Activated CD8-positive, alpha-beta T cell treated with anti-CD3 and anti-CD28 coated beads for 36 hours (primary cell): ENCODE measurements at regions of chr4 and their contacts with region 1.

Region 1: DNA sequence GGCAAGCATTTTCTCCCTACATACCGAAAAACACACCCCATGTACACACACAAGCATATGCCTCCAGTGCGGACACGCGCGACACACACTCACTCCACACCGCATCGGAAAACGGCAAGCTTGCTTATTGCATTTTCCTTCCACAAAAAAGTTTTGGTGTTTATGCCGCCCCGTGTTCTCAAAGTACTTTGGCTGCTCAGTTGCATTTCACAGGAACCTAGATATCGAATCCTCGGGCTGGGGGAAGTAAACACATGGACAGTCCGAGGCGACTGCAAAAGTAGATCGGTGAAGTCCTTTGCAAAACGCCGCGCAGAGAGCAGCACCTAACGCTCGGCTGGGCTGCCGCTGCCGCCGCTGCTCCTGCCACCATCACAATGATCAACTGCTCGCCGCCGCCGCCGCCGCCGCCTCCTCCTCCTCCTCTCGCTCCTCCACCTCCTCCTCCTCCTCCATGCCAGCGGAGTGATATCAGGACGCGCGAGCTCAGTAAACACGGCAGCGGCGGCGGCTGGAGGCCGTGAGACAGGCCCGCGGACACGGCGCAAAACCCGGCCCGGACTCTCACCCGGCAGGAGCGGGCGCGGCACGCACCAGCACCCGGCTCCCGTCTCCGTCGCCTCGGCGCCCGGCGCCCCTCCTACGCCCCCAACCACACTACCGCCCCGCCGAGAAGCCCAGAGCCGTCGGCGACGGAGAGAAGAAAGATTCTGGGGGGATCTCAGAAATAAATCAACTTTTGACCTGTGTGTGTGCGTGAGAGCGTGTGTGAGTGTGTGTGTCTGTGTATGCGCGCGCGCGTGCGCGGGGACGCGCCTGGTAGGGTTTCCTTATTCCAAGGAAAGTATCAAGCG is at the start of gene MAML3:
- DNase-seq: peak; percentile 88
- ATAC-seq: peak; percentile 32
- H3K4me3 Mint-ChIP-seq: peak within 1 kb of the TSS; percentile 84
- H3K27ac Mint-ChIP-seq: peak within 1 kb of the TSS; percentile 64
- H3K4me1 Mint-ChIP-seq: peaks cover 42% of the 10 kb centered on the region
- H3K27me3 Mint-ChIP-seq: peaks cover 12% of the 10 kb centered on the region
- CTCF ChIP-seq: no peak
- total RNA-seq, gene MAML3: 2.0 to 2.4 TPM

Region 2: DNA sequence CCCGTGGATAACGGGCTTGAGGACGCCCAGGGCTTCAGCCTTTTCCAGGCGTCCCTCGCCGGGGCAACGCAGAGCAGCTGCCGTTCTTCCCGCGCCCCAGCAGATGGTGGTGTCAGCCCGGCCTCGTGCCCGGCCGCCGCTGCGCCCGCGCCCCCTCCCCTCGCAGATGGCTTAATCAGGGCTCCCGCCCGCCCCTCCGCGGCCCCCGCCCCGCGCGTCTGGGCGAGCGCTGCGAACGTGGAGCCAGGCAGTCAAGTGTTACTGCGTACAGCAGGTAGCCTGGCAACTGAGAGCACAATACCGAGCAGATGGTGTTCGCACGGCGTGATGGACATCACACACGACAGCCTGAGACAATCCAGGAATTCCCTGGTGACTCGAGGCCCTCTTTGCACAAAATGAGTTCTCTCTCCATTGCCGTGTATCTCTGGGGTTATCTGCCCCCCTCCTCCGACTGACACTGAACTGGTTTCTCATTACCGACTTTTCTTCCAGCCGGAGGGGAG is 419.0 kb before region 1 on chr4:
- CTCF ChIA-PET with region 1: no interaction called
- POLR2A ChIA-PET with region 1: no interaction called
- intact Hi-C with region 1: loop called (anchors 10 kb)
- DNase-seq: peak; percentile 76
- ATAC-seq: peak; percentile 82
- H3K4me3 Mint-ChIP-seq: peak overlapping the region; percentile 60
- H3K27ac Mint-ChIP-seq: no peak overlapping the region
- H3K4me1 Mint-ChIP-seq: peaks cover 16% of the 10 kb centered on the region
- H3K27me3 Mint-ChIP-seq: peaks cover 38% of the 10 kb centered on the region
- CTCF ChIP-seq: peak; percentile 78

Region 3: DNA sequence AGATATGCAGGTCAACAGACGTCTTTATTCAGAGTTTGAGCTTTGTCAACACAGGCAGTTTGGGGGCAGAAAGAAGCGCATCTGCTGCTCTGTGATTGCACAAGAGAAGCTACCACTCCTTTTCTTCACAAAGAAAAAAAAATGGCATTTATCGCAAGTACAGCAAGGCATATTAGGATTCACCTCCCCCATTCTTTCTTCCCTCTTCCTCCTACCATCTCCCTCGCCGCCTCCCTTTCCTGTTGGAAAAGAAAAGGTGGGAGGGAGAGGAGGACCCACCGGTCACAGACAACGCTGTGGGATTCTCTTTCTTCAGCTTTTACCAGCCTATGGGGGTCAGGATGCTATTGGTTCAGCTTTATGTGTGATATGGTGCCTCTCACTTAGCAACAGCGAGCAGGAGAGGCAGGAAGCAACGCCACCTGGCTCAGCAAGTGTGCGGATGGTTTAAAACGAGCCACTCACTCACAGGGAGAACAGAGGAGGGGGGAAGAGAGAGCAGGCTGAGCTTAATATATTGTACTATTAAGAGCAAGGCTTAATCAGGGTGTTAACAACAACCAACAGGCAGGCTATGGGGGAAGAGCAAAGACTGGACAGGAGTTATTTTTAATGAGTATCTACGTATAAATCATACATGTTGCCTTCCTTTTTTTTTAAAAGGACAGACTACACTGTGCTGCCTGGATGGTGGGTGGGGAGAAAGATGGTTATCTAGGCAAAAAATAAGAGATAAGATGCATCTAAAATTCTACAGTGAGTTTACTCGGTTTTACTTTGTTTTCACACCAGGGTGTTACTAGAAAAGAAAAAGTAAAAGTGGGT is 104.7 kb before region 1 on chr4:
- CTCF ChIA-PET with region 1: interaction called, 11 read pairs
- POLR2A ChIA-PET with region 1: interaction called, 7 read pairs
- intact Hi-C with region 1: loop called (anchors 5 kb)
- DNase-seq: peak; percentile 74
- ATAC-seq: peak; percentile 93
- H3K4me3 Mint-ChIP-seq: peak overlapping the region; percentile 75
- H3K27ac Mint-ChIP-seq: peak overlapping the region; percentile 83
- H3K4me1 Mint-ChIP-seq: peaks cover 57% of the 10 kb centered on the region
- H3K27me3 Mint-ChIP-seq: peaks cover 7% of the 10 kb centered on the region
- CTCF ChIP-seq: no peak

Region 4: GRCh38 chr4:140061194-140061593 is 92.8 kb before region 1 on chr4:
- CTCF ChIA-PET with region 1: no interaction called
- POLR2A ChIA-PET with region 1: no interaction called
- intact Hi-C with region 1: no loop called
- DNase-seq: no peak
- ATAC-seq: peak; percentile 41
- H3K4me3 Mint-ChIP-seq: peak overlapping the region; percentile 20
- H3K27ac Mint-ChIP-seq: no peak overlapping the region
- H3K4me1 Mint-ChIP-seq: peaks cover 21% of the 10 kb centered on the region
- H3K27me3 Mint-ChIP-seq: peaks cover 9% of the 10 kb centered on the region
- CTCF ChIP-seq: no peak

Region 5: GRCh38 chr4:140071806-140072205 is 82.1 kb before region 1 on chr4:
- CTCF ChIA-PET with region 1: interaction called, 8 read pairs
- POLR2A ChIA-PET with region 1: interaction called, 19 read pairs
- intact Hi-C with region 1: loop called (anchors 5 kb)
- DNase-seq: peak; percentile 94
- ATAC-seq: peak; percentile 83
- H3K4me3 Mint-ChIP-seq: peak overlapping the region; percentile 63
- H3K27ac Mint-ChIP-seq: peak overlapping the region; percentile 79
- H3K4me1 Mint-ChIP-seq: peaks cover 44% of the 10 kb centered on the region
- H3K27me3 Mint-ChIP-seq: peaks cover 23% of the 10 kb centered on the region
- CTCF ChIP-seq: no peak

Region 6: GRCh38 chr4:140095694-140096482 is 58.1 kb before region 1 on chr4:
- CTCF ChIA-PET with region 1: interaction called, 4 read pairs
- POLR2A ChIA-PET with region 1: interaction called, 7 read pairs
- intact Hi-C with region 1: loop called (anchors 2 kb)
- DNase-seq: peak; percentile 91
- ATAC-seq: peak; percentile 81
- H3K4me3 Mint-ChIP-seq: peak overlapping the region; percentile 79
- H3K27ac Mint-ChIP-seq: peak overlapping the region; percentile 98
- H3K4me1 Mint-ChIP-seq: peaks cover 89% of the 10 kb centered on the region
- H3K27me3 Mint-ChIP-seq: no peaks in the 10 kb centered on the region
- CTCF ChIP-seq: no peak

Region 7: GRCh38 chr4:140116442-140117104 is 37.4 kb before region 1 on chr4:
- CTCF ChIA-PET with region 1: interaction called, 3 read pairs
- POLR2A ChIA-PET with region 1: interaction called, 6 read pairs
- intact Hi-C with region 1: loop called (anchors 5 kb)
- DNase-seq: peak; percentile 67
- ATAC-seq: peak; percentile 98
- H3K4me3 Mint-ChIP-seq: peak overlapping the region; percentile 19
- H3K27ac Mint-ChIP-seq: peak overlapping the region; percentile 79
- H3K4me1 Mint-ChIP-seq: peaks cover 39% of the 10 kb centered on the region
- H3K27me3 Mint-ChIP-seq: no peaks in the 10 kb centered on the region
- CTCF ChIP-seq: no peak

Region 8: GRCh38 chr4:140252742-140253555 is 99.0 kb after region 1 on chr4:
- CTCF ChIA-PET with region 1: interaction called, 11 read pairs
- POLR2A ChIA-PET with region 1: interaction called, 11 read pairs
- intact Hi-C with region 1: loop called (anchors 2 kb)
- DNase-seq: peak; percentile 62
- ATAC-seq: peak; percentile 69
- H3K4me3 Mint-ChIP-seq: peak overlapping the region; percentile 29
- H3K27ac Mint-ChIP-seq: no peak overlapping the region
- H3K4me1 Mint-ChIP-seq: peaks cover 25% of the 10 kb centered on the region
- H3K27me3 Mint-ChIP-seq: peaks cover 11% of the 10 kb centered on the region
- CTCF ChIP-seq: peak; percentile 97